SK-MEL-5 (cell line): ENCODE measurements at regions of chr9 and their contacts with region 1.

Region 1: DNA sequence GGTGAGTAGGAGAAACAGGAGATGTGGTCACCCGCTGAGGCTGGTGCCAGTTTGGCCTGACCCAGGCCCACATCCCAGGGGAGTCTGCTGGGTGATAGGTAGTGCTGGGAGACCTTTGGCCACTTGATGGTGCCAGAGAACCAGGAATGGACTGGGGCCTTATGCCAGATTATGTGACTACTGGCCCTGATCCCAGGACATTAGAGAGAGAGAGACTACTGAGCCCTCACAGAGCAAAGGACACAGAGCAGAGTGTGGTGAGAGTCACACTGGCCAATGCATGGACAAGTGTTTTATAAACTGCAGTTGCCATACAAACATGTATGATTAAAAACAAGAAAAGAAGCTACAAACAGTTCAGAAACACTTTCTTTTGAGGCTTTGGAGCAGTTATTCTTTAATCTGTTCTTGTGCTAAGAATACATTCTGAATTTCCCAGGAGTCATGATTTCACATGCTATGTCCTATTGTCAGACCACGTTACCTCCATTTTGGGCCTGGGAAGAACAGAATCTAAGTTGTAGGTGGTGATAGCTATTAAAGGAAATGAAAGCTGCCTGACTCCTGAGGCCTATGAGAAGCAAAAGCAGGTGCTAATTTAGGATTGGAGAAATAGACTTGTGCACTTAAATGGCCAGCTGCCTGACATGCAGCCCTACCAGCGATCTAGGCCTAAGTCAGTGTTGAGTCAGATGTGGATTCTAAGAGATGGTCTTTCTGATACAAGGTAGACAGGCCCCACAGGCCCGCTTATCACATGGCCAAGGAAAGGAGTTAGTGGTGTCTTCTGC is 32.6 kb upstream of the TMOD1 start:
- DNase-seq: peak; percentile 84

Region 2: DNA sequence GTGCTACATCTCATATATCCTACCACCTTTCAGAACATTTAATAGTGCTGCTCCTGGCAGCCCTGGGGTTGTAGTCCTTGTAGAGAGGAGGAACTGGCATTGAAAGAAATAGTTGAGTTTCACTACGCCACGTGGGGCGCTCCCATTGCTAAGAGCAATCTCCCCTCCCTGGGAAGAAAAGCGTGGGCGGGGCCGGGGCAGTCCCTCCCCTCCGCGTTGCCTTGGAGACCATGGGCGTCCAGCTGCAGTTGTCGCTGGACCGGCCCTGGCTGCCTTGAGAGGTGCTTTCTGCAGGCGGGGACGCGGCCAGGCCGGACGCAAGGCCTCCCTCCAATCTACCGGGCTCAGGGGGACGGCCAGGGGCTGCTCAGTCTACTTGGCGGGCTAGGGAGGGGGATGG is 161.8 kb before region 1 on chr9:
- in situ Hi-C with region 1: no loop called
- DNase-seq: no peak

Region 3: GRCh38 chr9:97615439-97616072 is 146.7 kb after region 1 on chr9:
- in situ Hi-C with region 1: no loop called
- DNase-seq: peak; percentile 77

Region 4: GRCh38 chr9:97632985-97633858 is 164.4 kb after region 1 on chr9 and contains the starts of genes NCBP1 and TSTD2:
- in situ Hi-C with region 1: loop called (anchors 25 kb)
- DNase-seq: peak; percentile 98
- total RNA-seq, gene NCBP1: 51.9 and 52.5 TPM in 2 replicates
- total RNA-seq, gene TSTD2: 17.7 and 17.9 TPM in 2 replicates